HCT116 (cell line): ENCODE measurements at regions of chr9 and their contacts with region 1.

Region 1: DNA sequence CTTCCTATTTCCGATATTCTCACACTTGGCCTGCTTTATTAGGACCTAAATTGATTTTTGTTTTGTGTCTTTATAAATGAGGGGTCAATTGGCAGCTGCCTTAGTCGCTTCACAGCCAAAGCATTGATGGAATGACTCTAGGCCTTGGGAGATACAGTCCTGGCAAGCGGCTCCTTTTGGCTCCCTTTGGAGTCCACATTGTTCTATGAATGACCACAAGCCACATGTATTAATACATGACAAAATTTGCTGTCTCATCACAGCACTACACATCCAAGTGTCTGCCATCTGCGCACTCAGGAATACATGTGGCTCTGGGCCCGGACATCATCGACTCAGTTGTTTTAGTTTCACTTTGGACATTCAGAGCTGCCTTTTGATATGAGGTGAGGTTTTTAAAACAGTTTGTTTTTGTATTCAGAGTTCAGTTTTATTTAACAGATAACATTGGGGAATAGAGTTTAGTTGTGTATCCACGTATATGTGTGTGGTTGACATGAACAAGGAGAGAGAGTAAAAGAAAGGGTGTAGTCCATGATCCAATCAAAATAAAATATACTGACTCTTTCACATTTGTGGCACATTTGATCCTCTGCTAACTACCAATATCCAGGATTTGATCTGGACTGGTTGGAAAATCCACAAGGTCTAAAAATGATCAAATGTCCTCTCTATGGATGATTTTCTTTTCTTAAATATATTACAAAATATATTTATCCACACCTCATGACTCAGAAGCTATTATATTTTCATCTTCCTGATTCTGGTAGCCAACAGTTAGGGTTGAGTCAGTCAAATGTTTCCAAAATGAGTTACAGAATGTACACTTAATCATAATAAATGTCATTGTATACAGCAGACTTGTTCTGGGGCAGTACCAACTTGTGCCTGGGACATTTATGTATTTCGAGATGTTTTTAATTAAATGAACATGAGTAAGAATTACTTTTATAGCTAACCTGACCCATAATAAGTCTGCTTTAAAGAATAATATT is 114.0 kb upstream of the MTAP start:
- DNase-seq: no peak
- ATAC-seq: no peak
- H3K4me3 ChIP-seq: peak overlapping the region in 1 of 2 experiments; percentile 11; a peak in 1 of 4 replicates
- H3K27ac ChIP-seq: peak overlapping the region; percentile 99
- H3K4me1 ChIP-seq: peaks cover 85 to 100% of the 10 kb centered on the region in 2 experiments
- H3K27me3 ChIP-seq: no peaks in the 10 kb centered on the region
- CTCF ChIP-seq: no peak
- POLR2A ChIP-seq: no peak
- RAD21 ChIP-seq: no peak

Region 2: DNA sequence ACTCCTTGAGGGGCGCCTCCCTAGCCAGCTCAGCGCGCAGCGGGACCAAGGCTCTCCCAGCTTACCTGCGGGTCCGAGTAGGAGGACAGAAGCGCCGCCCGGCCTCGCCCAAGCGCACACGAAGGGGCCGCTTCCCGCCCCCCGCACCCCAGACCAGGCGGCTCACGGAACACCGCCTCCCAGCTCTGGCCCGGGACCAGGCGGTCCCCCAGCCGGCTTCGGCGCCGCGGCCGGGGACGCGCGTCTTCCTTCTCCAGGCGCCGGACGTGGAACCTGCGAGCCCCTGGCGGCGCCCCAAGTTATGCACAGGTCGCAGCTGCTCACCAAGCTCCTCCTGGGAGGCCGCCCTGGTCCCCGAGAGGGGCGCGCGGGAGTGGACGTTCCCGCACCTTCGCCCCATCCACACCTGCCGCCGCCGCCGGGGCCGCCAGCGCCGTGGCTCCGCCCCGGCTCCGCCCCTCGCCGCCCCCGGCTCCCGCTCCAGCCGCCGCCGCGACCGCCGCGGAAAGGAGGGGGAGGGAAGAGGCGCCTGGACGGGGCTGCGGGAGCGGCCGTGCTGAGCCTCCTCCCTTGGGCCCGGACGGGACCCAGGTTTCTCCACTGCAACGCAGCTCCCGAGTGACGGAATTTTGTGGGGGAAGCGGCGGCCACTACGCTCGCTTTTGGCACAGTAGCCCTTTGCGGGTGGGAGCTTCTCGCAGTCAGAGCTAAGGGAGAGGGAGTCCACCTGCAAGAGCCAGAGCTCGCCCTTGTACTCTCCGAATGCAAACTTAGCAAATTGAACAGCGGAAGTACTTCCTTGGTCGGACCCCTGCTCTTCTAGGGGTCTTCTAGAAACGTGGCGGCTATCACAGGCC is 128.8 kb before region 1 on chr9:
- CTCF ChIA-PET with region 1: no interaction called
- POLR2A ChIA-PET with region 1: interaction called, 64 read pairs
- RAD21 ChIA-PET with region 1: no interaction called
- intact Hi-C with region 1: loop called (anchors 2 kb)
- DNase-seq: no peak
- ATAC-seq: peak; percentile 86
- H3K4me3 ChIP-seq: peak overlapping the region; percentile 65 to 72
- H3K27ac ChIP-seq: peak overlapping the region; percentile 99
- H3K4me1 ChIP-seq: peaks cover 59 to 83% of the 10 kb centered on the region in 2 experiments
- H3K27me3 ChIP-seq: no peaks in the 10 kb centered on the region
- CTCF ChIP-seq: 0 out of 6 replicates have a peak, but pooled peaks of 1 of the 3 experiments have one; percentile 2
- POLR2A ChIP-seq: no peak
- RAD21 ChIP-seq: peak; percentile 33; the same call in 1 of the 2 replicates

Region 3: GRCh38 chr9:21570643-21571275 is 117.6 kb before region 1 on chr9:
- CTCF ChIA-PET with region 1: no interaction called
- POLR2A ChIA-PET with region 1: interaction called, 154 read pairs
- RAD21 ChIA-PET with region 1: no interaction called
- intact Hi-C with region 1: no loop called
- DNase-seq: no peak
- ATAC-seq: peak; percentile 56
- H3K4me3 ChIP-seq: peak overlapping the region in 1 of 2 experiments; percentile 9; a peak in 1 of 4 replicates
- H3K27ac ChIP-seq: peak overlapping the region; percentile 99
- H3K4me1 ChIP-seq: peaks cover 97 to 100% of the 10 kb centered on the region in 2 experiments
- H3K27me3 ChIP-seq: no peaks in the 10 kb centered on the region
- CTCF ChIP-seq: no peak
- POLR2A ChIP-seq: no peak
- RAD21 ChIP-seq: no peak

Region 4: GRCh38 chr9:21585756-21586752 is 102.4 kb before region 1 on chr9:
- CTCF ChIA-PET with region 1: no interaction called
- POLR2A ChIA-PET with region 1: interaction called, 154 read pairs
- RAD21 ChIA-PET with region 1: no interaction called
- intact Hi-C with region 1: loop called (anchors 1 kb)
- DNase-seq: no peak
- ATAC-seq: 0 out of 2 replicates have a peak, but pooled peaks have one; percentile 9
- H3K4me3 ChIP-seq: no peak overlapping the region
- H3K27ac ChIP-seq: peak overlapping the region; percentile 99
- H3K4me1 ChIP-seq: peaks cover 88 to 99% of the 10 kb centered on the region in 2 experiments
- H3K27me3 ChIP-seq: no peaks in the 10 kb centered on the region
- CTCF ChIP-seq: peak in 1 of 3 experiments; percentile 40; a peak in 2 of 6 replicates
- POLR2A ChIP-seq: no peak
- RAD21 ChIP-seq: 0 out of 2 replicates have a peak, but pooled peaks have one; percentile 25

Region 5: GRCh38 chr9:21709464-21710058 is 21.2 kb after region 1 on chr9:
- CTCF ChIA-PET with region 1: interaction called, 4 read pairs
- POLR2A ChIA-PET with region 1: interaction called, 28 read pairs
- RAD21 ChIA-PET with region 1: no interaction called
- intact Hi-C with region 1: no loop called
- DNase-seq: peak; percentile 80
- ATAC-seq: peak; percentile 49
- H3K4me3 ChIP-seq: no peak overlapping the region
- H3K27ac ChIP-seq: peak overlapping the region; percentile 95
- H3K4me1 ChIP-seq: peaks cover 73 to 78% of the 10 kb centered on the region in 2 experiments
- H3K27me3 ChIP-seq: no peaks in the 10 kb centered on the region
- CTCF ChIP-seq: peak; percentile 69 to 92 (median 74)
- POLR2A ChIP-seq: no peak
- RAD21 ChIP-seq: peak; percentile 74

Region 6: DNA sequence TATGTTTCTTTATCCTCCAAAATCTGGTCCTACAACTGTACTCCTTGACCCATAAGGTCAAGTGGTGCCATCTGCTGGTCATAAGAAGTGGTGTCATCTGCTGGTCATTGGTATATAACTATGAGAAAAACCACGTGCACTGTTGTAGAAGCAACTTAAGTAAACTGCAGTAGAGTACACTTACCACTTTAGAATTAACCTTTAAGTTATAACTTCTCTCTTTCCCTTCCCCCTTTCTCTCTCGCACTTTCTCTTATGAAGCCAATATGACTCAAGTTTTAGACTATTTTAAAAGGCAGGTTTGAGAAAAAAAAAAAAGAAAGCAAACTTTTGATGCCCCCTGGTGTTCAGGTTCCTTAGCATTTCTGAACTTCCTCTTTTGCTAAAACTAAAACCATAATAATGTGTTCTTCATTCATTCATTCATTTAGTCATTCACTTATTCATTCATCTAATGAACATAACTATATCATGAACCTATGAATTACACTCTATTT is 101.2 kb after region 1 on chr9:
- CTCF ChIA-PET with region 1: interaction called, 5 read pairs
- POLR2A ChIA-PET with region 1: interaction called, 71 read pairs
- RAD21 ChIA-PET with region 1: interaction called in 1 of 2 experiments, 3 read pairs
- intact Hi-C with region 1: loop called (anchors 2 kb)
- DNase-seq: peak; percentile 92
- ATAC-seq: peak; percentile 76
- H3K4me3 ChIP-seq: no peak overlapping the region
- H3K27ac ChIP-seq: peak overlapping the region; percentile 97
- H3K4me1 ChIP-seq: peaks cover 28 to 57% of the 10 kb centered on the region in 2 experiments
- H3K27me3 ChIP-seq: no peaks in the 10 kb centered on the region
- CTCF ChIP-seq: peak; percentile 50 to 96 (median 85)
- POLR2A ChIP-seq: no peak
- RAD21 ChIP-seq: peak; percentile 91